HEK293 (cell line): ENCODE measurements at regions of chr5 and their contacts with region 1.

Region 1: DNA sequence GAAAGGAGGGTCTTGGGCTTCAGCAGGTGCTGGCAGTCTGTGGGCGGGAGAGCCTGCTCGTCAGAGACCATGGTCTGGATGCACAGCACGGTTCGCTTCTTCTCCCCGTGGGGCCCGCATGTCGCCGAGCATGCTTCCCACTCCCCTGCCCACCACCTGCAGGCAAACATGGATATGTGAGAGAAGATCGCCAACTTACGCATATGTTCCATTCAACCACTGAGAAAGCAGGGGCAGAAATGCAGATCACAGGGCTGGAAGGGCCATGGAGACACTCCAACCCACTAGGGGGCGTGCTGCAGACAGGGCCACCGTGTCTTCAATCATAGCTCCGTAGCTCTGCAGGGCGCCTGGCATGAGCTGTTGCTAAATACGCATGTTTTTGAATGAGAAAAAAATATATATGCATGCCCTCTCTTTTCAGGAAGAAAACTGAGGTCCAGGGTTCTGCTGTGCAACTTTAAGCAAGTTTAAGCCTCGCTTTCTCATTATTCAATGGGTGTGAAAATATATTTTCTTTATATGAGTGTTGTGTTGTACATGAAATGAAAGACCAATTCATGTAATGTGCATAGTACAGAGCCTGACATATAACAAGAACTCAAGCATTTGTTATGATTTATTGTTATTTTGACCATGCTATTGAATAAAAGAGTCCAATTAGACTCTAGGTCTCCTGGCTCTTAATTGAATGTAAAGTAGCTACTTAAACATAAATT is 148.0 kb downstream of the TARS1 start:
- H3K4me3 ChIP-seq: no peak overlapping the region
- H3K27ac ChIP-seq: no peak overlapping the region
- H3K4me1 ChIP-seq: no peaks in the 10 kb centered on the region
- CTCF ChIP-seq: peak; percentile 42; the same call in 1 of the 2 replicates

Region 2: GRCh38 chr5:33563983-33564908 is 24.6 kb before region 1 on chr5:
- CTCF ChIA-PET with region 1: interaction called, 11 read pairs
- POLR2A ChIA-PET with region 1: no interaction called
- H3K4me3 ChIP-seq: no peak overlapping the region
- H3K27ac ChIP-seq: no peak overlapping the region
- H3K4me1 ChIP-seq: no peaks in the 10 kb centered on the region
- CTCF ChIP-seq: no peak

Region 3: DNA sequence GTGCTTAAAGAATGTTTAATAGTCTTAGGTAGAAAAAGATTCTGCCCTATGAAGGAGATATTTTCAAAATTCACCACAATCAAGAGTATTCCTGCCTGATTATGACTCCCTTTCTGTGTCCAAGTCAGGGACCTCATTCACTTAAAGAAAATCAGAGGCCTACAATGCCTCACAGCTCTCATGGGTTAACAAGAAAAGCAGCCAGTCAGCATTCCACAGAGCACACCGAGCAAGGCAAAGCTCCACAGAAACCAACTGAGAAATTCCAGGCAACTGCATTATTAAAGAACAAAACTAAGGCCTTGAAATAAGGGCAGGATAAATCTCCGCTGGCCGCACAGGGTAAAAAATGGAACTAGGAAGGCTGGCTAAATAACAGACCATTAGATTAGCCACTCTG is 13.1 kb after region 1 on chr5:
- CTCF ChIA-PET with region 1: interaction called, 23 read pairs
- POLR2A ChIA-PET with region 1: no interaction called
- H3K4me3 ChIP-seq: no peak overlapping the region
- H3K27ac ChIP-seq: no peak overlapping the region
- H3K4me1 ChIP-seq: no peaks in the 10 kb centered on the region
- CTCF ChIP-seq: no peak

Region 4: DNA sequence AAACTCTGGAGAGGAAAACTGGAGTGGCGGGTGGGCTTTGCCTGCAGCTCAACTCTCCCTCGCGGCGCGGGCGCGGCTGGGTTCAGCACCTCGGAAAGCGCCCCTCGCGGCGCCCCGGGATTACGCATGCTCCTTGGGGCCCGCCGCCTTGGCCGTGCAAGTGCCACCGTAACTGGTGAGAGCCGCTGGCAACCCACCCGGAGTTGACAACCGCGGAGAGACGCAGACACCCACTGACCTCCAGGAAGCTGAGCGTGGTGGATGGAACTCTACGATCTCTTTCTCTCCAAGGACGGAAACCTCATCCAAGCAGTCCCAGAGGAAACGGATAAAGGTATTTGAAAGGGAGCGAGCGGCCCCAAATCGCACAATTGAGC is 347.2 kb after region 1 on chr5:
- CTCF ChIA-PET with region 1: interaction called, 22 read pairs
- POLR2A ChIA-PET with region 1: no interaction called
- H3K4me3 ChIP-seq: no peak overlapping the region; the same call in 1 of the 2 replicates
- H3K27ac ChIP-seq: no peak overlapping the region
- H3K4me1 ChIP-seq: no peaks in the 10 kb centered on the region
- CTCF ChIP-seq: no peak